ENCODE measurements at regions of chr9 and their contacts with region 1.

Region 1: DNA sequence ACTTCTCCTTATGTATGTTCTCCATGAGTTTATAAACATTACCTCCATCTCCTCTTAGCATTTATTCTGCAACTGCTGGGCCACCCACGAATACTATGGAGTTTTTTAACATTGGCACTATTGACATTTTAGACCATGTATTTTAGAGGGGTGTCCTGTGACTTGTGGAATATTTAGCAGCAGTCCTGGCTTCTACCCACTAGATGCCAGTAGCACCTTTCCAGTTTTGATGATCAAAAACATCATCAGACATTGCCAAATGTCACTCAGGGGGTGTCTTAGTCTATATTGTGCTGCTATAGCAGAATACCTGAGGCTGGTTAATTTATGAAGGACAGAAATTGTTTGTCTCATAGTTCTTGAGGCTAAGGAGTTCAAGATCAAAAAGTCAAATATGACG is 187.5 kb upstream of the RORB start:
- DNase-seq: no peak
- ATAC-seq: peak in 2 of 4 donors; percentile 32 to 33
- H3K4me3 ChIP-seq: no peak overlapping the region
- H3K27ac ChIP-seq: no peak overlapping the region
- H3K4me1 ChIP-seq: no peaks in the 10 kb centered on the region
- H3K27me3 ChIP-seq: no peaks in the 10 kb centered on the region
- CTCF ChIP-seq: peak in 6 of 12 donors; percentile 3 to 32 (median 20)
- POLR2A ChIP-seq: no peak

Region 2: GRCh38 chr9:74379718-74380117 is 70.1 kb after region 1 on chr9:
- intact Hi-C with region 1: loop called in 1 of 10 experiments (anchors 10 kb)
- DNase-seq: no peak
- ATAC-seq: peak in 1 of 4 donors; percentile 27
- H3K4me3 ChIP-seq: no peak overlapping the region
- H3K27ac ChIP-seq: no peak overlapping the region
- H3K4me1 ChIP-seq: no peaks in the 10 kb centered on the region
- H3K27me3 ChIP-seq: no peaks in the 10 kb centered on the region
- CTCF ChIP-seq: peak in 2 of 12 donors; percentile 11 to 22
- POLR2A ChIP-seq: no peak

Measured in heart left ventricle (tissue), 16 donors.